Sigmoid colon (tissue), 7 donors: ENCODE measurements at regions of chr9 and their contacts with region 1.

Region 1: GRCh38 chr9:112997236-112997941 is 14.6 kb downstream of the ZNF883 start:
- DNase-seq: no peak
- H3K4me3 ChIP-seq: no peak overlapping the region
- H3K27ac ChIP-seq: no peak overlapping the region
- H3K4me1 ChIP-seq: no peaks in the 10 kb centered on the region
- H3K27me3 ChIP-seq: no peaks in the 10 kb centered on the region
- CTCF ChIP-seq: no peak
- EP300 ChIP-seq: no peak
- POLR2A ChIP-seq: no peak

Region 2: GRCh38 chr9:112841261-112841660 is 156.1 kb before region 1 on chr9:
- intact Hi-C with region 1: no loop called
- DNase-seq: no peak
- H3K4me3 ChIP-seq: no peak overlapping the region
- H3K27ac ChIP-seq: no peak overlapping the region
- H3K4me1 ChIP-seq: peaks cover 0 to 6% (median 0%) of the 10 kb centered on the region in 4 donors
- H3K27me3 ChIP-seq: no peaks in the 10 kb centered on the region
- CTCF ChIP-seq: no peak
- EP300 ChIP-seq: no peak
- POLR2A ChIP-seq: no peak

Region 3: DNA sequence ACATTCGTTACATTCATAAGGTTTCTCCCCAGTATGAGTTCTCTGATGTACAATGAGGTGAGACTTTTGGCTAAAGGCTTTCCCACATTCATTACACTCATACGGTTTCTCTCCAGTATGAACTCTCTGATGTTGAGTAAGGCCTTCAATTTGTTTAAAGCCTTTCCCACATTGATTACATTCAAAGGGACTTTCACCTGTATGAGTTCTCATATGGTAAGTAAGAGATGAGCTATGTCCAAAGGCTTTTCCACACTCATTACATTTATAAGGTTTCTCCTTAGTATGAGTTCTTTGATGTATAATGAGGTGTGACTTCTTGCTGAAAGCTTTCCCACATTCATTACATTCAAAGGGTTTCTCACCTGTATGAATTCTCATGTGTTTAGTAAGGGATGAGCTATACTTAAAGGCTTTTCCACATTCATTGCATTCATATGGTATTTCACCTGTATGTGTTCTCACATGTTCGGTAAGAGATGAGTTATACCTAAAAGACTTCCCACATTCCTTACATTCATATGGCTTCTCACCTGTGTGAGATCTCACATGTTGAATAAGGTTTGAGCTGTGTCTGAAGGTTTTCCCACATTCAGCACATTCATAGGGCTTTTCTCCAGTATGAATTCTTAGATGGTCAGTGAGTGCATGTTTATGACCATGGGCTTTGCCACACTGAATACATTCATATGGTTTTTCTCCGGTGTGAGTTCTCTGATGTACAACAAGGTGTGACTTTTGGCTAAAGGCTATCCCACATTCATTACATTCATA is 45.7 kb after region 1 on chr9:
- intact Hi-C with region 1: loop called (anchors 10 kb)
- DNase-seq: no peak
- H3K4me3 ChIP-seq: no peak overlapping the region
- H3K27ac ChIP-seq: no peak overlapping the region
- H3K4me1 ChIP-seq: no peaks in the 10 kb centered on the region
- H3K27me3 ChIP-seq: no peaks in the 10 kb centered on the region
- CTCF ChIP-seq: no peak
- EP300 ChIP-seq: no peak
- POLR2A ChIP-seq: no peak